CD4-positive, alpha-beta memory T cell (primary cell): ENCODE measurements at regions of chr2 and their contacts with region 1.

Region 1: DNA sequence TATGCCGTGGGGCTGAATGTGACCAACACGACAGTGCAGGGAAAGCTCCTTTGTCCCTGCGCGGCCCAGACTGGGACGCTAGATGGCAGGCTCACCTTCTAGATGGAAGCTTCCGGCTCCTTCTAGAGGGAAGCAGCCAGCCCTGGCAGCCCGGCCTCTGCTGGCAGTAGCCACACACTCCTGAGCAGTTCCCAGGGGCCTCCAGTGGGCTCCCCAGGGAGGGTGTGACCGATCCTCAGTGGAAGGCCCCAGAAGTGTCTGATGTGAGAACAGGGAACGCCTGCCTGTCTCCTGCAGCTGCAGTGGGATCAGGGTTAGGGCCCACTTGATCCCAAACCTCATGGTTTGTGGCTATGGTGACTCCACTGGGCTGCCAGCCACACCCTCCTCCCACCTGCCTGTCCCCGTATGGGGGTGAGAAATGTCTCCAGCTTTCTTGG is 48.5 kb upstream of the LRPPRC start:
- DNase-seq: peak; percentile 60 to 68 (median 66)
- H3K4me3 ChIP-seq: no peak overlapping the region
- H3K4me3 Mint-ChIP-seq: peak overlapping the region in 1 of 8 donors; percentile 38
- H3K27ac ChIP-seq: no peak overlapping the region
- H3K27ac Mint-ChIP-seq: peak overlapping the region in 1 of 7 donors; percentile 14
- H3K4me1 ChIP-seq: peaks cover 6% of the 10 kb centered on the region
- H3K4me1 Mint-ChIP-seq: peaks cover 0 to 4% (median 2%) of the 10 kb centered on the region in 4 donors
- H3K27me3 ChIP-seq: no peaks in the 10 kb centered on the region
- H3K27me3 Mint-ChIP-seq: peaks cover 0 to 2% of the 10 kb centered on the region in 2 donors

Region 2: GRCh38 chr2:44033947-44034346 is 10.4 kb before region 1 on chr2:
- CTCF ChIA-PET with region 1: interaction called, 14 read pairs
- POLR2A ChIA-PET with region 1: no interaction called
- intact Hi-C with region 1: no loop called
- DNase-seq: no peak
- H3K4me3 ChIP-seq: no peak overlapping the region
- H3K4me3 Mint-ChIP-seq: no peak overlapping the region
- H3K27ac ChIP-seq: no peak overlapping the region
- H3K27ac Mint-ChIP-seq: no peak overlapping the region
- H3K4me1 ChIP-seq: no peaks in the 10 kb centered on the region
- H3K4me1 Mint-ChIP-seq: no peaks in the 10 kb centered on the region
- H3K27me3 ChIP-seq: no peaks in the 10 kb centered on the region
- H3K27me3 Mint-ChIP-seq: peaks cover 0 to 7% of the 10 kb centered on the region in 2 donors

Region 3: GRCh38 chr2:44342854-44343253 is 298.6 kb after region 1 on chr2:
- CTCF ChIA-PET with region 1: interaction called, 7 read pairs
- POLR2A ChIA-PET with region 1: no interaction called
- intact Hi-C with region 1: loop called (anchors 1 kb)
- DNase-seq: peak in 4 of 5 donors; percentile 14 to 29 (median 22)
- H3K4me3 ChIP-seq: no peak overlapping the region
- H3K4me3 Mint-ChIP-seq: no peak overlapping the region
- H3K27ac ChIP-seq: no peak overlapping the region
- H3K27ac Mint-ChIP-seq: no peak overlapping the region
- H3K4me1 ChIP-seq: no peaks in the 10 kb centered on the region
- H3K4me1 Mint-ChIP-seq: peaks cover 0 to 2% (median under 1%) of the 10 kb centered on the region in 4 donors
- H3K27me3 ChIP-seq: no peaks in the 10 kb centered on the region
- H3K27me3 Mint-ChIP-seq: no peaks in the 10 kb centered on the region